Activated CD4-positive, alpha-beta memory T cell treated with anti-CD3 and anti-CD28 coated beads for 36 hours (primary cell): ENCODE measurements at regions of chr17 and their contacts with region 1.

Region 1: GRCh38 chr17:10646392-10646990 is 10.6 kb downstream of the MYH3 start:
- DNase-seq: peak; percentile 79
- H3K4me3 Mint-ChIP-seq: no peak overlapping the region
- H3K27ac Mint-ChIP-seq: no peak overlapping the region
- H3K4me1 Mint-ChIP-seq: no peaks in the 10 kb centered on the region
- H3K27me3 Mint-ChIP-seq: no peaks in the 10 kb centered on the region

Region 2: DNA sequence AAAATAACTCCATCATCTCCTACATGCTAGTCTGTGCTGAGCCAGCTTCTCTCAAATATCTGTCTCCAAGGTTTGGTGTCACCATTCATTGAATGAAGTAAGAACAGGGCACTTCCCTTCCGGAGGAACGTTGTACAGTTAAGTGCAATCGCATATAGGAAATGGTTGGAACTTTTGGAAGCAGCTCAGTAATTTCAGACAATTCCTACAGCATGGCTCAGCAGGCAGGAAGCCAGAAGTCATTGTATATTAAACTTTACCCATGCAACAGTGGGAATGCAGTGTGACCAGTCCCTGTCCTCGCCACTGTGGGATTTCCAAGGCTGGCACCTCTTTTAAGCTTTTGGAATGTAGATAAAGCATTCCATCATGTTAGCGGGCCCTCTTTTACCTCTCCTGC is 45.9 kb before region 1 on chr17:
- CTCF ChIA-PET with region 1: no interaction called
- POLR2A ChIA-PET with region 1: no interaction called
- intact Hi-C with region 1: no loop called
- DNase-seq: no peak
- H3K4me3 Mint-ChIP-seq: no peak overlapping the region
- H3K27ac Mint-ChIP-seq: no peak overlapping the region
- H3K4me1 Mint-ChIP-seq: no peaks in the 10 kb centered on the region
- H3K27me3 Mint-ChIP-seq: peaks cover 6% of the 10 kb centered on the region

Region 3: DNA sequence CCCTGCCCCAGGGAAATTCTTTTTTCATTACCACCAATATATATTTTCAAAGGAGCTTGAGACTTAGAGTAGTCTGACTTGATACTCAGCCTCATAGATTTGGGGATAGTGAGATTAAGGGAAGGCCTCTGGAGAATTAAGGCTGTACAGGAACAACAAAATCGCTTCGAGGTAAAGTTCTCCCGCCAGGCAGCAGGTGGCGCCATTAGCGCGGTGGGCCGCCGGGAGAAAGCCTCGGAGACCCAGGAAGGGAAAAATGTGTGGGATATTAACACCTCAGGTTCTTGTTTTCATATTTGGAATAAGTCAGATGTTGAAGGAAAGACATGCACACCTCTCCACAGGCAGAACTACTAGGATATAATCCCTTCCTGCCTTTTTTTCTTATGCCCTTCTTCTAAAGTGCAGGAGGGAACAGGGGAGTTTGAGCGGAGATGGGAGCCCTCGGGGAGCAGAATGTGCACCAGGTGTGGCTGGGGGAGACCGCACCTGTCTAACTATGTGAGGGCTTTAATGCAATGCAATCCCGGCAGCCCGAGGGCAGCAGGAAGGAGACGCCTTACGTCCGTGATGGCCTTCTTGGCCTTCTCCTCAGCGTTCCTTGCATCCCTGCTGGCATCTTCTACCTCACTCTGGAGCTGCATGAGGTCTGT is 15.3 kb before region 1 on chr17:
- CTCF ChIA-PET with region 1: interaction called, 47 read pairs
- POLR2A ChIA-PET with region 1: no interaction called
- intact Hi-C with region 1: no loop called
- DNase-seq: peak; percentile 38
- H3K4me3 Mint-ChIP-seq: no peak overlapping the region
- H3K27ac Mint-ChIP-seq: no peak overlapping the region
- H3K4me1 Mint-ChIP-seq: peaks cover 7% of the 10 kb centered on the region
- H3K27me3 Mint-ChIP-seq: no peaks in the 10 kb centered on the region

Region 4: GRCh38 chr17:10683853-10684252 is 37.4 kb after region 1 on chr17:
- CTCF ChIA-PET with region 1: interaction called, 20 read pairs
- POLR2A ChIA-PET with region 1: no interaction called
- intact Hi-C with region 1: no loop called
- DNase-seq: no peak
- H3K4me3 Mint-ChIP-seq: no peak overlapping the region
- H3K27ac Mint-ChIP-seq: no peak overlapping the region
- H3K4me1 Mint-ChIP-seq: peaks cover 5% of the 10 kb centered on the region
- H3K27me3 Mint-ChIP-seq: no peaks in the 10 kb centered on the region

Region 5: GRCh38 chr17:10737168-10737622 is 90.7 kb after region 1 on chr17:
- CTCF ChIA-PET with region 1: interaction called, 13 read pairs
- POLR2A ChIA-PET with region 1: no interaction called
- intact Hi-C with region 1: no loop called
- DNase-seq: peak; percentile 49
- H3K4me3 Mint-ChIP-seq: no peak overlapping the region
- H3K27ac Mint-ChIP-seq: no peak overlapping the region
- H3K4me1 Mint-ChIP-seq: peaks cover 7% of the 10 kb centered on the region
- H3K27me3 Mint-ChIP-seq: peaks cover 6% of the 10 kb centered on the region